ENCODE measurements at regions of chr1 and their contacts with region 1.

Region 1: DNA sequence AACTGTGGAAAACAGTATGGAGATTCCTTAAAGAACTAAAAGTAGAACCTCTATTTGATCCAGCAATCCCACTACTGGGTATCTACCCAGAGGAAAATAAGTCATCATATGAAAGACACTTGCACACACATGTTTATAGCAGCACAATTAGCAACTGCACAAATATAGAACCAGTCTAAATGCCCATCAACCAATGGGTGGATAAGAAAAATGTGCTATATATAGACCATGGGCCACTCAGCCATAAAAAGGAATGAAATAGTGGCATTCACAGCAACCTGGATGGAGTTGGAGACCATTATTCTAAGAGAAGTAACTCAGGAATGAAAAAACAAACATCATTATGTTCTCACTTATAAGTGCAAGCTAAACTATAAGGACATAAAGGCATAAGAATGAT is 105.0 kb upstream of the PGBD5 start:
- DNase-seq: no peak
- H3K4me3 ChIP-seq: no peak overlapping the region
- CTCF ChIP-seq: no peak

Region 2: GRCh38 chr1:230581446-230582079 is 50.5 kb after region 1 on chr1:
- in situ Hi-C with region 1: loop called (anchors 5 kb)
- DNase-seq: no peak
- H3K4me3 ChIP-seq: no peak overlapping the region
- CTCF ChIP-seq: no peak

Measured in astrocyte of the cerebellum (primary cell).